Activated CD4-positive, alpha-beta T cell treated with anti-CD3 and anti-CD28 coated beads, Interleukin-2, amount 10 ng/mL, durations not matched to agents 7 days and 5 days (primary cell): ENCODE measurements at regions of chr1 and their contacts with region 1.

Region 1: GRCh38 chr1:156860113-156860627 is 495 bp upstream of the NTRK1 start:
- DNase-seq: peak; percentile 49
- H3K4me3 Mint-ChIP-seq: peak overlapping the region; percentile 61
- H3K27ac Mint-ChIP-seq: no peak overlapping the region
- H3K4me1 Mint-ChIP-seq: peaks cover 46% of the 10 kb centered on the region
- H3K27me3 Mint-ChIP-seq: peaks cover 44% of the 10 kb centered on the region

Region 2: GRCh38 chr1:156689035-156689952 is 170.9 kb before region 1 on chr1:
- CTCF ChIA-PET with region 1: interaction called, 13 read pairs
- POLR2A ChIA-PET with region 1: no interaction called
- DNase-seq: peak; percentile 76
- H3K4me3 Mint-ChIP-seq: no peak overlapping the region
- H3K27ac Mint-ChIP-seq: no peak overlapping the region
- H3K4me1 Mint-ChIP-seq: peaks cover 31% of the 10 kb centered on the region
- H3K27me3 Mint-ChIP-seq: peaks cover 63% of the 10 kb centered on the region

Region 3: GRCh38 chr1:156789621-156790318 is 70.4 kb before region 1 on chr1:
- CTCF ChIA-PET with region 1: interaction called, 247 read pairs
- POLR2A ChIA-PET with region 1: no interaction called
- DNase-seq: no peak
- H3K4me3 Mint-ChIP-seq: no peak overlapping the region
- H3K27ac Mint-ChIP-seq: no peak overlapping the region
- H3K4me1 Mint-ChIP-seq: peaks cover 7% of the 10 kb centered on the region
- H3K27me3 Mint-ChIP-seq: no peaks in the 10 kb centered on the region

Region 4: GRCh38 chr1:156813750-156814570 is 46.2 kb before region 1 on chr1:
- CTCF ChIA-PET with region 1: interaction called, 247 read pairs
- POLR2A ChIA-PET with region 1: interaction called, 4 read pairs
- DNase-seq: peak; percentile 74
- H3K4me3 Mint-ChIP-seq: peak overlapping the region; percentile 80
- H3K27ac Mint-ChIP-seq: peak overlapping the region; percentile 99
- H3K4me1 Mint-ChIP-seq: peaks cover 81% of the 10 kb centered on the region
- H3K27me3 Mint-ChIP-seq: no peaks in the 10 kb centered on the region

Region 5: GRCh38 chr1:156838981-156839410 is 21.2 kb before region 1 on chr1:
- CTCF ChIA-PET with region 1: interaction called, 158 read pairs
- POLR2A ChIA-PET with region 1: no interaction called
- DNase-seq: peak; percentile 55
- H3K4me3 Mint-ChIP-seq: no peak overlapping the region
- H3K27ac Mint-ChIP-seq: no peak overlapping the region
- H3K4me1 Mint-ChIP-seq: peaks cover 21% of the 10 kb centered on the region
- H3K27me3 Mint-ChIP-seq: peaks cover 31% of the 10 kb centered on the region

Region 6: GRCh38 chr1:156892190-156893047 is 32.2 kb after region 1 on chr1:
- CTCF ChIA-PET with region 1: interaction called, 31 read pairs
- POLR2A ChIA-PET with region 1: no interaction called
- DNase-seq: peak; percentile 87
- H3K4me3 Mint-ChIP-seq: peak overlapping the region; percentile 63
- H3K27ac Mint-ChIP-seq: peak overlapping the region; percentile 65
- H3K4me1 Mint-ChIP-seq: peaks cover 24% of the 10 kb centered on the region
- H3K27me3 Mint-ChIP-seq: peaks cover 50% of the 10 kb centered on the region

Region 7: DNA sequence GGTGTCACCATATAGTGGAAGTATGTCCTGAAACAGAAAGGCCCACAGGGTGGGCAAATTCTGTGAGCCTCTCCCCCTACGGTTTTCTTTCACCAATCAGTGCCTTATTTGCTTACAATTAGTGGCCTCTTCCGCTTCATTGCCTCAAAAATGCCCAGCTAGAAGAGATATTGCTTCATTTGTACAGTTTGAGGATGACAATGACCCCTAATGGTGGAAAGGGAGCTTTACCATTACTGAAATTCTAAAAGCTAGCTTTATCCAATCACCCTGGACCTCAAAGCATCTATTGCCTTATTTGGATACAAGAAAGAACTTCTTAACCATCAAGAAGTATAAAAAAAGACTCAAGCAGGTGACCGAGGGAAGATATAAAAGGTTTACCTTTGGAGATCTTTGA is 109.8 kb after region 1 on chr1:
- CTCF ChIA-PET with region 1: no interaction called
- POLR2A ChIA-PET with region 1: no interaction called
- DNase-seq: no peak
- H3K4me3 Mint-ChIP-seq: no peak overlapping the region
- H3K27ac Mint-ChIP-seq: no peak overlapping the region
- H3K4me1 Mint-ChIP-seq: no peaks in the 10 kb centered on the region
- H3K27me3 Mint-ChIP-seq: peaks cover 58% of the 10 kb centered on the region